ENCODE measurements at regions of chr14 and their contacts with region 1.

Region 1: DNA sequence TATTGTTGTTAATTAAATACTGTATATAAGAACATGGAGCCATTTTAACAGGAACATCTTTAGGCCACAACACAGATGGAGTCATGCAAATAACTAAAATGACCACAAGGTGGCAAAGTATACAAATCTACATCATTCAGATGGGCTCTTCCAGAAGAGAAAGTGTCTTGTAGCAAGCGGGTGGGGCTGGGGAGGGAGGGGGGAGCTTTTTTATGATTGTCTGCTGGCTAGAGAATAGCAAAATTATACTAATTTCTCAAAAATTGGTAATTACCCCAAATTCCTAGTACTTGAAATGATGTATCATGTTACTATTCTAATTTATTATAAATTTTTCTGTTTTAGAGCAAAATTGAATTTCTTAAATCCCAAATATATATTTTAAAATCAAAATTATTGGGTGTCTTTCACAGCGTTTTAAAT is 378.7 kb downstream of the PRKD1 start:
- DNase-seq: no peak
- ATAC-seq: peak; percentile 82 to 95 (median 92)
- H3K4me3 ChIP-seq: no peak overlapping the region
- H3K27ac ChIP-seq: no peak overlapping the region
- H3K4me1 ChIP-seq: no peaks in the 10 kb centered on the region
- H3K27me3 ChIP-seq: no peaks in the 10 kb centered on the region
- CTCF ChIP-seq: peak; percentile 52 to 66 (median 55)
- POLR2A ChIP-seq: no peak

Region 2: DNA sequence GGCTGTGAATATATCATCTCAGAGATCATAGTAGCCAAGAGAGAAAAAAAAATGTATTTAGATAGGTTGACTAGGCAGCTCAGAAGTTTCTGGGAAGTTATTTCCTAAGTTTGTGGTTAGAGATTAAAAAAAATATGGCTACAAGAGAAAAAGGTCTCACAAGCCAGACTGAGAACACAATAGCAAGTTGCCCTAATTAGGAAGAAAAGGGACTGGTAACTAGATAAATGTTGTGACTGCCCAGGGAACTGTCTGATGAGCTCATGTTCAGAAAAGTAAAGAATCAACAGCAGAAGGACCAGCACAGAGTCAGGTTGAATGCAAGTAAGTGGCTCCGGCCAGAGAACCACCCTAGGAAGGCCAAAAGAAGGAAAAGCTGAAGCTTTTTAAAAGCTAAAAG is 122.1 kb after region 1 on chr14:
- intact Hi-C with region 1: no loop called
- DNase-seq: no peak
- ATAC-seq: no peak
- H3K4me3 ChIP-seq: no peak overlapping the region
- H3K27ac ChIP-seq: no peak overlapping the region
- H3K4me1 ChIP-seq: no peaks in the 10 kb centered on the region
- H3K27me3 ChIP-seq: no peaks in the 10 kb centered on the region
- CTCF ChIP-seq: no peak
- POLR2A ChIP-seq: no peak

Region 3: GRCh38 chr14:30005114-30005808 is 456.3 kb after region 1 on chr14:
- intact Hi-C with region 1: loop called (anchors 10 kb)
- DNase-seq: no peak
- ATAC-seq: peak; percentile 80 to 90 (median 86)
- H3K4me3 ChIP-seq: no peak overlapping the region
- H3K27ac ChIP-seq: no peak overlapping the region
- H3K4me1 ChIP-seq: no peaks in the 10 kb centered on the region
- H3K27me3 ChIP-seq: no peaks in the 10 kb centered on the region
- CTCF ChIP-seq: peak; percentile 67 to 69 (median 69)
- POLR2A ChIP-seq: no peak

Region 4: DNA sequence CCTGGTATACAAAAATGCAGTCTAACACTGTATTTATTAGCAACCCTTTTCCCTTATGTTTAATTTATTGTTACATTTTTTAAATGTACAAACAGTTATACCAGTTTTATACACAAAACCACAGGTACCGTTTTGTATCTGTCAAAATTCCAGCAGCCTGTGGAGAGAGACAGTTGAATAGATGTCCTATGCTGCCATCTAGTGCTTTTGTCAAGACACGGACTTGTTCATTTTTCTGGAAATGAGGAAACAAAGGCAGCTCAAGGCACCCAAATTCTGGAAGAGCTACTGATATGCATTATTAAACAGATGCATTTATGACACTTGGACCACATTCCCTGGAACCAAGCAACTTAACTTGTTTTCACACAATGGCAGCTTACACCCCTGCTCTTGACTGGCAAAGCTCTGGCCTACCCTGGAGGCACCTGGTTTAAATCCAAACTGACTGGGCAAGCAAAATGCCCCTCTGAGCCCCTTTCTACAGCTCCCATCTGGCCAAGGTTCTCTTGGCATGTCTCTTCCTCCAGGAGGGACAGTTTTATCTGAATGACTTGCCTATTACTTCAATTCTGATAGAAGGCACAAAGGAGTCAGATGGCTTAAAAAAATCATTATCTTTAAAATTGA is 665.6 kb after region 1 on chr14:
- intact Hi-C with region 1: loop called in 1 of 2 experiments (anchors 10 kb)
- DNase-seq: no peak
- ATAC-seq: peak; percentile 72 to 82 (median 76)
- H3K4me3 ChIP-seq: no peak overlapping the region
- H3K27ac ChIP-seq: no peak overlapping the region
- H3K4me1 ChIP-seq: no peaks in the 10 kb centered on the region
- H3K27me3 ChIP-seq: no peaks in the 10 kb centered on the region
- CTCF ChIP-seq: peak; percentile 51 to 79 (median 61)
- POLR2A ChIP-seq: no peak